ENCODE measurements at regions of chr20 and their contacts with region 1.

Region 1: GRCh38 chr20:4585104-4585753 is 136.5 kb upstream of the PRND start:
- DNase-seq: peak; percentile 40
- ATAC-seq: no peak
- H3K4me3 ChIP-seq: no peak overlapping the region
- H3K27ac ChIP-seq: no peak overlapping the region
- H3K4me1 ChIP-seq: no peaks in the 10 kb centered on the region
- H3K27me3 ChIP-seq: no peaks in the 10 kb centered on the region
- CTCF ChIP-seq: no peak
- POLR2A ChIP-seq: no peak
- RAD21 ChIP-seq: no peak

Region 2: GRCh38 chr20:4493386-4493785 is 91.8 kb before region 1 on chr20:
- CTCF ChIA-PET with region 1: no interaction called
- POLR2A ChIA-PET with region 1: no interaction called
- dilution Hi-C with region 1: no loop called
- in situ Hi-C with region 1: no loop called
- intact Hi-C with region 1: no loop called
- DNase-seq: no peak
- ATAC-seq: no peak
- H3K4me3 ChIP-seq: no peak overlapping the region
- H3K27ac ChIP-seq: no peak overlapping the region
- H3K4me1 ChIP-seq: peaks cover 17% of the 10 kb centered on the region
- H3K27me3 ChIP-seq: no peaks in the 10 kb centered on the region
- CTCF ChIP-seq: no peak
- POLR2A ChIP-seq: no peak
- RAD21 ChIP-seq: no peak

Region 3: GRCh38 chr20:4507288-4507719 is 77.9 kb before region 1 on chr20:
- CTCF ChIA-PET with region 1: no interaction called
- POLR2A ChIA-PET with region 1: no interaction called
- dilution Hi-C with region 1: loop called (anchors 10 kb)
- in situ Hi-C with region 1: no loop called
- intact Hi-C with region 1: no loop called
- DNase-seq: peak; percentile 95
- ATAC-seq: peak; percentile 86
- H3K4me3 ChIP-seq: no peak overlapping the region
- H3K27ac ChIP-seq: peak overlapping the region; percentile 93
- H3K4me1 ChIP-seq: peaks cover 9% of the 10 kb centered on the region; the same call in 1 of the 2 replicates
- H3K27me3 ChIP-seq: no peaks in the 10 kb centered on the region
- CTCF ChIP-seq: no peak
- POLR2A ChIP-seq: no peak
- RAD21 ChIP-seq: peak; percentile 18; the same call in 1 of the 2 replicates

Region 4: GRCh38 chr20:4555188-4555890 is 29.9 kb before region 1 on chr20:
- CTCF ChIA-PET with region 1: no interaction called
- POLR2A ChIA-PET with region 1: no interaction called
- dilution Hi-C with region 1: no loop called
- in situ Hi-C with region 1: no loop called
- intact Hi-C with region 1: no loop called
- DNase-seq: peak; percentile 92
- ATAC-seq: peak; percentile 97
- H3K4me3 ChIP-seq: no peak overlapping the region
- H3K27ac ChIP-seq: peak overlapping the region; percentile 28; the same call in 1 of the 2 replicates
- H3K4me1 ChIP-seq: peaks cover 6% of the 10 kb centered on the region
- H3K27me3 ChIP-seq: no peaks in the 10 kb centered on the region
- CTCF ChIP-seq: no peak
- POLR2A ChIP-seq: no peak
- RAD21 ChIP-seq: peak; percentile 27